Transverse colon (tissue), 4 donors: ENCODE measurements at regions of chr15 and their contacts with region 1.

Region 1: GRCh38 chr15:33581032-33581431 is 270.3 kb downstream of the RYR3 start:
- DNase-seq: no peak
- H3K4me3 ChIP-seq: no peak overlapping the region
- H3K27ac ChIP-seq: no peak overlapping the region
- H3K4me1 ChIP-seq: no peaks in the 10 kb centered on the region
- H3K27me3 ChIP-seq: no peaks in the 10 kb centered on the region
- CTCF ChIP-seq: no peak
- EP300 ChIP-seq: no peak
- POLR2A ChIP-seq: no peak

Region 2: DNA sequence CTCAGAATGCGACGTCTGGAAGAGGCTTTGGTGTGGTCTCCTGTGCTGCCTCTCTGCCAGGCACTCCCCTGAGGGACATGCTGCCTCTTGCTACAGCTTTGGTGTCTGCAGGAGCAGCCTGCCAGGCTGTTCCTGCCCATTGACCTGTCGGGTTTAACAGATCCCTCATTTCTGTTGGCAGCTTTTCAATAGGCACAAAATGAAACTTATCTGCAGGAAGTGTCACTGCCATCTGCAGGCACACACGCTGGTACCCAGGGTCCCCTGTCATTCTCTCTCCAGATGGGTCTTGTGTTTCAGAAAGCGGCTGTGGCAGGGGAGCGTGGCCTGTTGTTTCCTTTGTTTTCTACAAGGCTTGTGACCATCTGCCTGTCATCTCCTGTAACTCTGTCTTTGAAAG is 58.9 kb after region 1 on chr15:
- in situ Hi-C with region 1: loop called in 1 of 4 experiments (anchors 10 kb)
- intact Hi-C with region 1: no loop called
- DNase-seq: no peak
- H3K4me3 ChIP-seq: no peak overlapping the region
- H3K27ac ChIP-seq: no peak overlapping the region
- H3K4me1 ChIP-seq: no peaks in the 10 kb centered on the region
- H3K27me3 ChIP-seq: no peaks in the 10 kb centered on the region
- CTCF ChIP-seq: no peak
- EP300 ChIP-seq: no peak
- POLR2A ChIP-seq: no peak

Region 3: GRCh38 chr15:33693166-33693800 is 112.3 kb after region 1 on chr15:
- in situ Hi-C with region 1: no loop called
- intact Hi-C with region 1: no loop called
- DNase-seq: no peak
- H3K4me3 ChIP-seq: no peak overlapping the region
- H3K27ac ChIP-seq: no peak overlapping the region
- H3K4me1 ChIP-seq: no peaks in the 10 kb centered on the region
- H3K27me3 ChIP-seq: no peaks in the 10 kb centered on the region
- CTCF ChIP-seq: no peak
- EP300 ChIP-seq: no peak
- POLR2A ChIP-seq: no peak